Activated T-helper 1 cell treated with anti-CD3 and anti-CD28 coated beads, Interleukin-12 subunit alpha, Interleukin-12 subunit beta, Interleukin-2, Interleukin-4 antibody, amounts not matched to agents 30 ng/mL and 10 ng/mL and 1 ng/mL, durations not matched to agents 14 hours and 24 hours and 36 hours (primary cell): ENCODE measurements at regions of chr13 and their contacts with region 1.

Region 1: DNA sequence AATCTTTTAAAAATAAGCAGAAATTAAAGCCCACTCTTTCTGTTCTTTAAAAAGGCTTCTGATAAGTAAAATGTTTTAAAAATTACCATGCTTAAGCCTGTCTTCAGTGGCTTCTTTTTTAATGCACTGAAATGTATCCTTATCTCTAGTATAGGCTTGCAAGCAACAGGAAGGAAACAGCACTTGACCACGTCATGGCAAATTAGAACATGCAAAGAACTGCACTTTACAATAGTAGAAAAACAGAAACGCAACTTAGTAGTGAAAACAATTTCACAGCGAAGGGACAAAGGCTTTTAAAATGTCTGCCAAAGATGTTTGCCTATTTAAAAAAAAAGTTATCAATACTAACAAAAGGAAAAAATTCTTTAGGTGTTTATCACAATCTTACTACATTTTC is 36.3 kb downstream of the ELF1 start:
- DNase-seq: peak; percentile 62
- H3K4me3 Mint-ChIP-seq: peak overlapping the region; percentile 91
- H3K27ac Mint-ChIP-seq: peak overlapping the region; percentile 90
- H3K4me1 Mint-ChIP-seq: peaks cover 79% of the 10 kb centered on the region
- H3K27me3 Mint-ChIP-seq: no peaks in the 10 kb centered on the region

Region 2: GRCh38 chr13:40922437-40923040 is 60.2 kb before region 1 on chr13:
- intact Hi-C with region 1: loop called (anchors 2 kb)
- DNase-seq: no peak
- H3K4me3 Mint-ChIP-seq: peak overlapping the region; percentile 77
- H3K27ac Mint-ChIP-seq: peak overlapping the region; percentile 70
- H3K4me1 Mint-ChIP-seq: peaks cover 10% of the 10 kb centered on the region
- H3K27me3 Mint-ChIP-seq: peaks cover 1% of the 10 kb centered on the region

Region 3: DNA sequence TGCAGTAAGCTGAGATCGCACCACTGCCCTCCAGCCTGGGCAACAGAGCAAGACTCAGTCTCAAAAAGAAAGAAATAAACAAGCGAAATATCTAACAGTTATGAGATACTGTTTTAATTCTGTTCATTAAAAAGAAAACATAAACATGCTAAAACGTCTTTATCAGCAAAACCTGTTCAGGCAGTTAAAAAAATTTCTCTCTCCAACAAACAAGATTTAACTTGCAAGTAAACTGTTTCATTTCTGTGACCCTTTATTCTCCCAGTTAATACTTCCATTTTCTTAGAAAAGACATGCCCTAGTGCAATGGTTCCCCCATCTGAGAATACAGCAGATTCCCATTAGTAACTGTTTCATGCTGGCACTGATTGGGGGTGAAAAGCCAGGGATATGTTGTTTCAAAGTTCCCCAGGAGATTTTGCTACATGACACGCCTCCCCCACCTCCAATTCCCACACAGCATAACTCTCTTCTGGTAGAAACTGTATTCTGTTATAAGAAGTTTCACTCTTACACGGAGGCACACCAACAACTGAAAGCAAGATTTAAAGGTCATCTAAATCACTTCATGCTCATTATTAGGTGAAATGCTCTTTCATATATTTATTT is 11.9 kb after region 1 on chr13:
- intact Hi-C with region 1: loop called (anchors 1 kb)
- DNase-seq: no peak
- H3K4me3 Mint-ChIP-seq: peak overlapping the region; percentile 73
- H3K27ac Mint-ChIP-seq: peak overlapping the region; percentile 79
- H3K4me1 Mint-ChIP-seq: peaks cover 85% of the 10 kb centered on the region
- H3K27me3 Mint-ChIP-seq: no peaks in the 10 kb centered on the region

Region 4: DNA sequence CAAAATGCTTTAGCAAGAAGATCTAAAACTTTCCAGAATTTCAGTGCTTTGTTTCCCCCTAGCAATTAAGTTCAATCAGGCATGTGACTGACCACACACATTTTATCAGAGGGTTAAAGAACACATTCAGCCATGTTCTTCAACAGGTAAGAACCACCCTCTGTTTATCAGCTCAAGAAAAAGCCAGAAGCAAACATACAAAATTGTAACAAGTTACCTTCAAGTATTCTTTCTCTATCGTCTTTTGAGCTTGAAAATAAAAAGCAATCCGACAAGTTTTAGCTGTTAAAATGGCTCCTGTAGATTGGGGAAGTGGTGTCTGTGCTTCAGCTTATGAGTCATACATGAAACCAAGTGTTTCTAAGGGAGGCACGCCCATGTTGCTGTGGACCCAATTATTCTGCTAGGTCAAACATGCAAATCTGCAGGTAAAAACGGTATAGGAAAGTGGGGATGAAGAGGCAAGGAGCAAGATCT is 36.3 kb after region 1 on chr13 and contains the start of gene ELF1:
- intact Hi-C with region 1: loop called (anchors 1 kb)
- DNase-seq: peak; percentile 49
- H3K4me3 Mint-ChIP-seq: peak within 1 kb of the TSS; percentile 91
- H3K27ac Mint-ChIP-seq: peak within 1 kb of the TSS; percentile 97
- H3K4me1 Mint-ChIP-seq: peaks cover 53% of the 10 kb centered on the region
- H3K27me3 Mint-ChIP-seq: no peaks in the 10 kb centered on the region
- total RNA-seq, gene ELF1: 75.3 and 76.8 TPM in 2 replicates

Region 5: DNA sequence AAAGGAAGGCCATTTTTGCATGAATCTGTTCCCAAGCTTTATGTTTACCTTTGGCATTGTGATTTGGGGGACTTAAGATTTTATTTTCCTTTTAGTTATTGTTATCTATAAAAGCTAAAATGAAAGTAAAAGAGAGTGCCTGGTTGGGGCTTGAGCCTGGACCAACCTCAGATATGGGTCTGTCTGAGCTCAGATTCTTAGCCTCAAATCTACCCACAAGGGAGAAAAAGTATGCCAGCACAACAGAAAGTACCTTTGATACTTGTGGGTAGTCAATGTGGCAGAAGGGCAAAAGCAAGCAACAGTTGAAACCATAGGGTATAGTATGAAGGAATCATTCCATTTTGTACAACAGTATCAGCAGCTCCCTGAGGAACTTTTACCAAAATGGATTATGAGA is 176.4 kb after region 1 on chr13:
- intact Hi-C with region 1: no loop called
- DNase-seq: no peak
- H3K4me3 Mint-ChIP-seq: no peak overlapping the region
- H3K27ac Mint-ChIP-seq: no peak overlapping the region
- H3K4me1 Mint-ChIP-seq: no peaks in the 10 kb centered on the region
- H3K27me3 Mint-ChIP-seq: peaks cover 4% of the 10 kb centered on the region

Region 6: GRCh38 chr13:41268764-41269163 is 286.0 kb after region 1 on chr13:
- intact Hi-C with region 1: no loop called
- DNase-seq: no peak
- H3K4me3 Mint-ChIP-seq: no peak overlapping the region
- H3K27ac Mint-ChIP-seq: no peak overlapping the region
- H3K4me1 Mint-ChIP-seq: peaks cover 11% of the 10 kb centered on the region
- H3K27me3 Mint-ChIP-seq: no peaks in the 10 kb centered on the region